Left cardiac atrium (tissue), 4 donors: ENCODE measurements at regions of chr5 and their contacts with region 1.

Region 1: GRCh38 chr5:132419502-132420468 is 50.3 kb downstream of the SLC22A5 start:
- DNase-seq: peak; percentile 72
- ATAC-seq: peak; percentile 74 to 76

Region 2: DNA sequence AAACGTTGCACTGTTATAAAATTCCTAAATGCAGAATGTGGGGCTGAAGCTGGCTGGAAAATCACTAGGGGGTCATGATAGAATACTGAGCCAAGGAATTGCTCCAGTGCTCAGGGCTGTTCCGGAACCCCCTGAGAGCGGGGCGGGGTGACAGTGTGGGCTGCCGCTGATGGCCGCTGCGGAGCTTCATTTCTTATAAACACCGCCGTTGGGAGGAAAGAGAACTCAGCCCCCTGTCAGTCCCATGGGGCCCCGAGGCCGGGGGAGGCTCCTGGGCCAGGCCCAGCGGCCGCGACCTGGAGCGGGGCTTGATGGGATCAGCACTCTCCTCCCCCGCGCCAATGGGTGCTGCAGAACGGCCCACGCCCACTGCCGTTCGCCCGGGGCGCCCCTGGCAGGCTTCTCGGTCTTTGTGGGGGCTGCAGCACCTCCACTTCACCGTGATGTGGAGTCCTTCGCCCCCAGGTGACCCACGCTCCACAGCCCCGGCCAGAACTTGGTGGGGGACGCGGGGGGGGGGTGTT is 75.9 kb after region 1 on chr5:
- intact Hi-C with region 1: loop called (anchors 2 to 5 kb)
- DNase-seq: peak; percentile 90
- ATAC-seq: peak; percentile 70 to 74